HEK293 (cell line): ENCODE measurements at regions of chr22 and their contacts with region 1.

Region 1: DNA sequence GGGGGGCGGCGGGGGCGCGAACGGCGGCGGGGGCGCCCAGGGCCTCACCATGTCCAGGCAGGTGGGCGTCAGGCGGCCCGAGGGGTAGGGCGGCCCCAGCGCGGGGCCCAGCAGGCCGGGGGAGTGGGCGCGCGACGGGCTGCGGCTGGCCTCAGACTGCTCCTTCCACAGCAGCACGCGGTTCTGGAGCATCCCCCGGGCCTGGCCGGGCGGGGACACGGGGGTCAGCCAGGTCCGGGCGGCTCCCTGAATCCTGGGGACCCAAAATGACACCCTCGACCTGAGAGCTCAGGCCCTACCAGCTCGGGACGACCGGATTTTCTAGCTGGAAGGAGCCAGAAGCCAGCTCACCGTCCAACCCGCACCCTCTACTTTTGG is 5.5 kb upstream of the SLC16A8 start:
- H3K4me3 ChIP-seq: no peak overlapping the region
- H3K27ac ChIP-seq: no peak overlapping the region
- H3K4me1 ChIP-seq: no peaks in the 10 kb centered on the region
- CTCF ChIP-seq: no peak

Region 2: GRCh38 chr22:38104084-38104483 is 14.6 kb after region 1 on chr22:
- CTCF ChIA-PET with region 1: interaction called, 23 read pairs
- POLR2A ChIA-PET with region 1: interaction called, 4 read pairs
- H3K4me3 ChIP-seq: no peak overlapping the region
- H3K27ac ChIP-seq: no peak overlapping the region
- H3K4me1 ChIP-seq: no peaks in the 10 kb centered on the region
- CTCF ChIP-seq: no peak